ENCODE measurements at regions of chr1 and their contacts with region 1.

Region 1: DNA sequence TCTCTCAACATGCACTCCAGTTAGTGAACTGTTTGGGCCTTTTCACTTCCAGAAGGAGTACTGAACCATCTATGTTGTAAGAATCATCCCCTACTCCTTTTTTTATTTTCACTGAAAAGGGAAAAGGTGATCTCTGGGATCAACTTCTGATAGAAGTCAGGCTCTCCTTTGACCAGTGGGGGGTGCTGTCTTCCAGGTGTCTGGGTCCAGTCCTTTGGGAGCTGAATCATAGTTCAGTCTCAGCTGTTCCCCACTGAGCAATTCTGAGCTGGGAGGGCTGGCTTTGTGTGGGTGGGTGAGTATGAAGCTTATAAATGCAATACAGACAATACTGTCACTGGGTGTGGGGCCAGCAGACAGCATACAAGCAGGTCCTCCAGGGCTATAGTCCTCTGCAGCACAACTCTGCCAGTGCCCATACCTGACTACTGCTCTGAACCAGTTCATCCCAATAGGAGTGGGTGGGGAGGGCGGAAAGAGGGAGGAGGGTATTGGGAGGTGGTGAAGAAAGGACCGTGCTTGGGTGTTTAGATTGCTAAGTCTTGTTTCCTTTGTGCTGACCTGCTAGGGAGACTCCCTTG is 12.5 kb upstream of the SARS1 start:
- DNase-seq: peak; percentile 91 to 93 (median 92)
- ATAC-seq: peak; percentile 85
- H3K4me3 ChIP-seq: no peak overlapping the region
- H3K27ac ChIP-seq: no peak overlapping the region
- H3K4me1 ChIP-seq: peaks cover 22 to 39% of the 10 kb centered on the region in 2 experiments
- H3K27me3 ChIP-seq: no peaks in the 10 kb centered on the region
- CTCF ChIP-seq: peak; percentile 87 to 98 (median 97)
- EP300 ChIP-seq: no peak
- POLR2A ChIP-seq: no peak
- RAD21 ChIP-seq: peak; percentile 88 to 92

Region 2: DNA sequence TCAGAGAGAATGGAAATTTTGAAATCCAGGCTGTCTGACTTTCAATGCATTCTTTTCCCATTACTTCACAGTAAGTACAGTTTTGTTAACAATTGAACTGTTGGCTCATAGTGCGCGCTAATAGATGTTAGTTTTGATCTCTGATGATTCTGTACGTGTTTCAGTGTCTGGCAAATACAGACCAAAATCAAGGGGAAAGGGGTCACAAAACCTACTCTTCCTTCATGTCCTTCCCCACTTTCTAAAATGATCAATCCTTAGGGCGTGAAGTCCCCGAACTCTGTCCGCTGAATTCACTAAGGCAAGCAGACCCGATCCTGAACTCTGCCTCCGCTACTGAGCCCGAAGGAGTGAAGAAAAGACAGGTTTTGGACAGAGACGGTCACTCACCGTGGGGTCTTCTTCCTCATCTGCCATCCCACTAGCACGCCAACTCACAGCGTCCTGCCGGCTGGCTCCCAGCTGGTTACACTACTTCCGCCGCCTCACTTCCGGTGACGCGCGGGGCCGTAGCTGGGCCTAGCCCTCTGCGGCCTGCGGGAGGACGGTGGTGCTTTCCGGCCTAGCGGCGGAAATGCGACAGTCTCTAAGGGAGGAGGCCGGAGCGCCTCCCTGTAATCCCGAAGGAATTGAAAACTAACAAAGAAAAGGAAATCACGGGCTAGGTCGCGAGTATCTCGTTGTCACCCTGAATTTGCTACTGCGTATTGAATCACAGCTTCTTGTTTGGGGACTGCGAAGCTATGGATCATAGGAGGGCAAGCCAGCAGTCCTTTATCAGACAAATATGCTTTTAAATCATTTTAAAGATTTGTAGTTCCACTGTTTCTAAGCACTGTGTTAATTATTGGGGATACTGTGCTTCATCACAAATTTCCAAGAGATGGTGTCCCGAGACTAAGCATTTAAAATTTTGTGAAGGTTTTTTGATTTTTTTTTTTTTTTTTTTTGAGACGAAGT is 125.4 kb before region 1 on chr1 and contains the start of gene TAF13:
- CTCF ChIA-PET with region 1: no interaction called
- POLR2A ChIA-PET with region 1: no interaction called
- in situ Hi-C with region 1: no loop called
- intact Hi-C with region 1: no loop called
- DNase-seq: peak; percentile 95 to 98 (median 96)
- ATAC-seq: peak; percentile 99
- H3K4me3 ChIP-seq: peak within 1 kb of the TSS; percentile 79
- H3K27ac ChIP-seq: peak within 1 kb of the TSS; percentile 89
- H3K4me1 ChIP-seq: peaks cover 18 to 20% of the 10 kb centered on the region in 2 experiments; a peak in 4 of 5 replicates
- H3K27me3 ChIP-seq: no peaks in the 10 kb centered on the region
- CTCF ChIP-seq: peak; percentile 17 to 30 (median 29); a peak in 3 of 6 replicates
- EP300 ChIP-seq: no peak
- POLR2A ChIP-seq: peak; percentile 98
- RAD21 ChIP-seq: 0 out of 4 replicates have a peak, but pooled peaks of 1 of the 2 experiments have one; percentile 13
- polyA plus RNA-seq, gene TAF13: 14.9 to 21.0 TPM

Region 3: DNA sequence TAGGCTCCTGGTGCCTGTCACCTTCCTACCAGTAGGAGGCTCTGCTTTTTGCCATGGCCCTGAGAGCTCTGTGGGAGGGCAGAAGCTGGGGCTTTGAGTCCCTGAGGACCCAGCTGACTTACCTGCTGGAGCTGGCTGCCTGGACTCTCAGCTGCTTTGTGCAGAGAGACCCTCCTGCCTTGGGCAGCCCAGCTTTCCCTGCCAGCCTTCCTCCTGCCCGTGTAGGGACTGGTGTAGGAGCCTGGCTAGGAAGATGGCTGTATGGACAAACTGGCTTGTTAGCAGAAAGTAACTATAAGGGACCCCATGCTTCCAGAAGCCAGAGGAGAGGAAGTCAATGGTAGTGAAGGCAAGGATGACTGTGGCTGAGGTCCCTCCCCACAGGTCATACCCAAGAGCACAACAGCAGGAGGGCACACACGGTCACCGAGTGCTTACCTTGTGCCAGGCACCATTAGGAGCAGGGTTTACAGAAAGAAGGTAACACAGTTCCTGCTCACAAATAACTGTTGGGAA is 38.4 kb after region 1 on chr1:
- CTCF ChIA-PET with region 1: interaction called, 4 read pairs
- POLR2A ChIA-PET with region 1: interaction called, 4 read pairs
- in situ Hi-C with region 1: no loop called
- intact Hi-C with region 1: loop called (anchors 2 kb)
- DNase-seq: peak; percentile 72 to 79 (median 78)
- ATAC-seq: peak; percentile 90
- H3K4me3 ChIP-seq: no peak overlapping the region
- H3K27ac ChIP-seq: no peak overlapping the region
- H3K4me1 ChIP-seq: peaks cover 15 to 28% of the 10 kb centered on the region in 2 experiments; a peak in 4 of 5 replicates
- H3K27me3 ChIP-seq: no peaks in the 10 kb centered on the region
- CTCF ChIP-seq: peak; percentile 85 to 91 (median 88)
- EP300 ChIP-seq: no peak
- POLR2A ChIP-seq: peak; percentile 58; the same call in 1 of the 2 replicates
- RAD21 ChIP-seq: peak; percentile 46 to 64

Region 4: DNA sequence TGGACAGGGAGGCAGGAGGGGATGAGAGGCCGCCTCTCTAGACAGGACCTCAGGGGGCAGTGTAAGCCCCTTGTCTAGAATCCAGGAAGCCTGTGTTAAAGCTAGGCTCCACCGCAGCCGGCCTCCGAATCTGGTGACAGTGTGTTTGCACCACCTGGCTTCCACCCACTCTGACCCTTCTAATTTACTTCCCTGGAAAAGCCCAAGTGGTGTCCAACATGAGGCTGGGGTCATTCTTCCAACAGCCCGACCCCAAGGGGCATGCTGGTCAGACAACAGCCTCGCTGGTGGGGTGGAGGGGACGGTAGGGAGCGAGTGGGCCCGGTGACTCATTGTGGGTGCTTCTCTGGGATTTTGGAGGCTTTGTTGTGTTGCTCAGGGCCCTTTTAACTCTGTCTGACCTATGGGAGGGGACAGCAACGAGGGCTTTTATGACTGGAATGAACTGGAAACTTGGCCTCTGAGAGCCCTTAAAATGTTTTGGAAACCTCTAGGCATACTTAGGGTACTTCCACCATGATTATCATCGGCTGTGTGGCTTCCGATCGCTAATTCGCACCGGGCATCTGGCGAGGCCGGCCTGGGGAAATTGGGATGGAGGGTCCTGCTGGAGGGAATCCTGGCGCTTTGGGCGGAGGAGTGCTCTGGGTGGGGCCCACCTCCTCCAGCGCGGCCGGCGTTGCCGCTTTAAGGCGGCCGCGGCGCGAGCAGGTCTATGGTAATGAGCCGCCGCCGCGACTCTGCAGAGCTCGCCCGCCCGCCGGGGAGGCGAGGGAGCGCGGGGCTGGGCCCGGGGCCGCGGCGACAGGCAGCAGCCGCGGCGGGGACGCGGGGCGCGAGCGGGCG is 47.8 kb after region 1 on chr1 and contains the start of gene CELSR2:
- CTCF ChIA-PET with region 1: no interaction called
- POLR2A ChIA-PET with region 1: interaction called, 3 read pairs
- in situ Hi-C with region 1: no loop called
- intact Hi-C with region 1: loop called (anchors 2 kb)
- DNase-seq: peak; percentile 91 to 95 (median 93)
- ATAC-seq: peak; percentile 86
- H3K4me3 ChIP-seq: peak within 1 kb of the TSS; percentile 54
- H3K27ac ChIP-seq: peak within 1 kb of the TSS; percentile 19; the same call in 1 of the 3 replicates
- H3K4me1 ChIP-seq: peaks cover 19 to 53% of the 10 kb centered on the region in 2 experiments
- H3K27me3 ChIP-seq: no peaks in the 10 kb centered on the region
- CTCF ChIP-seq: peak; percentile 19 to 38 (median 31); a peak in 4 of 6 replicates
- EP300 ChIP-seq: no peak
- POLR2A ChIP-seq: no peak
- RAD21 ChIP-seq: no peak
- polyA plus RNA-seq, gene CELSR2: 0.31 to 0.86 TPM

Region 5: GRCh38 chr1:109263597-109264398 is 62.6 kb after region 1 on chr1:
- CTCF ChIA-PET with region 1: interaction called, 28 read pairs
- POLR2A ChIA-PET with region 1: no interaction called
- in situ Hi-C with region 1: no loop called
- intact Hi-C with region 1: loop called (anchors 1 kb)
- DNase-seq: peak; percentile 91 to 96 (median 93)
- ATAC-seq: peak; percentile 99
- H3K4me3 ChIP-seq: no peak overlapping the region
- H3K27ac ChIP-seq: no peak overlapping the region
- H3K4me1 ChIP-seq: peaks cover 0 to 31% of the 10 kb centered on the region in 2 experiments; a peak in 2 of 5 replicates
- H3K27me3 ChIP-seq: no peaks in the 10 kb centered on the region
- CTCF ChIP-seq: peak; percentile 99 to 100 (median 100)
- EP300 ChIP-seq: peak; percentile 16; the same call in 1 of the 2 replicates
- POLR2A ChIP-seq: no peak
- RAD21 ChIP-seq: peak; percentile 98 to 100

Measured in K562 (cell line).